Breast epithelium (tissue), 4 donors: ENCODE measurements at regions of chr6 and their contacts with region 1.

Region 1: GRCh38 chr6:56659721-56660380 is 17.2 kb upstream of the DST start:
- DNase-seq: no peak
- H3K4me3 ChIP-seq: no peak overlapping the region
- H3K27ac ChIP-seq: peak overlapping the region; percentile 71 to 85
- H3K4me1 ChIP-seq: peaks cover 0 to 7% of the 10 kb centered on the region in 2 donors
- H3K27me3 ChIP-seq: no peaks in the 10 kb centered on the region
- CTCF ChIP-seq: no peak
- POLR2A ChIP-seq: no peak

Region 2: GRCh38 chr6:56955171-56956045 is 295.6 kb after region 1 on chr6:
- intact Hi-C with region 1: loop called (anchors 10 kb)
- DNase-seq: peak; percentile 53 to 69
- H3K4me3 ChIP-seq: peak overlapping the region; percentile 64 to 85 (median 65)
- H3K27ac ChIP-seq: peak overlapping the region in 1 of 2 donors; percentile 50
- H3K4me1 ChIP-seq: no peaks in the 10 kb centered on the region
- H3K27me3 ChIP-seq: no peaks in the 10 kb centered on the region
- CTCF ChIP-seq: peak in 2 of 3 donors; percentile 26 to 36
- POLR2A ChIP-seq: no peak